ENCODE measurements at regions of chr7 and their contacts with region 1.

Region 1: GRCh38 chr7:66920769-66921395 is at the start of gene TMEM248:
- DNase-seq: peak; percentile 95
- H3K4me3 ChIP-seq: peak within 1 kb of the TSS; percentile 94
- H3K27ac ChIP-seq: peak within 1 kb of the TSS; percentile 89
- H3K4me1 ChIP-seq: peaks cover 32% of the 10 kb centered on the region
- CTCF ChIP-seq: no peak
- total RNA-seq, gene TMEM248: 66.4 and 76.5 TPM in 2 replicates

Region 2: DNA sequence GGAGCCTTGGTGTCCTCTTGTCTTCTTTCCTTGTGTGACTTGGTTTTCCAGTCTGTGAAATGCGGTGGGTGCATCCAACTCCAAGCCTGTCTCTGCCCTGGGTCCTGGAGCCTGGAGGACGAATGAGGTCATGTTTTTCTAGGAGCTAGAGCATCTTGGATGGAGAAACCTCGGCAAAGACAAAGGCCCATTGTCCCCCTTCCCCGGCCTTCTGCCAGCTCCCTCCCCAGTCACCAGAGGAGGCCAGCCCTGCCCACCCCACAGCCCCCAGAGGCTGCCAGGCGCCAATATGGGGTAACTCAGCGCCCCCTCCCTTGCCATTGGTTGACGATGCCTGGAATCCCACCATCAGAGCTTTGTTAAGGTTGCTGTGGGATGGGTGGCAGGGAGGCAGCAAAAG is 251.8 kb before region 1 on chr7:
- CTCF ChIA-PET with region 1: no interaction called
- POLR2A ChIA-PET with region 1: no interaction called
- intact Hi-C with region 1: no loop called
- DNase-seq: no peak
- H3K4me3 ChIP-seq: no peak overlapping the region
- H3K27ac ChIP-seq: no peak overlapping the region
- H3K4me1 ChIP-seq: no peaks in the 10 kb centered on the region
- CTCF ChIP-seq: no peak

Region 3: DNA sequence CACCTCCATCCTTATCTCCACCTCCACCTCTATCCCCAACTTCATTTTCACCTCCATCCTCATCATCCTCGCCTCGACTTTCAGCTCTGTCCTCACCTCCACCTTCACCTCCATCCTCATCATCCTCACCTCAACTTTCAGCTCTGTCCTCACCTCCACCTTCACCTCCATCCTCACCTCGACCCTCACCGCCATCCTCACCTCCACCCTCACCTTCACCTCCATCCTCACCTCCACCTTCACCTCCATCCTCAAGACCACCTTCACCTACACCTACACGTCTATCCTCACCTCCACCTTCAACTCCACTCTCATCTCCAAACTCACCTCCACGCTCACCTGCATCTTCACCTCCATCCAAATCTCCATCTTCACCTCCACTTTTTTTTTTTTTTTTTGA is 192.3 kb before region 1 on chr7:
- CTCF ChIA-PET with region 1: no interaction called
- POLR2A ChIA-PET with region 1: no interaction called
- intact Hi-C with region 1: no loop called
- DNase-seq: no peak
- H3K4me3 ChIP-seq: no peak overlapping the region
- H3K27ac ChIP-seq: no peak overlapping the region
- H3K4me1 ChIP-seq: no peaks in the 10 kb centered on the region
- CTCF ChIP-seq: no peak

Region 4: DNA sequence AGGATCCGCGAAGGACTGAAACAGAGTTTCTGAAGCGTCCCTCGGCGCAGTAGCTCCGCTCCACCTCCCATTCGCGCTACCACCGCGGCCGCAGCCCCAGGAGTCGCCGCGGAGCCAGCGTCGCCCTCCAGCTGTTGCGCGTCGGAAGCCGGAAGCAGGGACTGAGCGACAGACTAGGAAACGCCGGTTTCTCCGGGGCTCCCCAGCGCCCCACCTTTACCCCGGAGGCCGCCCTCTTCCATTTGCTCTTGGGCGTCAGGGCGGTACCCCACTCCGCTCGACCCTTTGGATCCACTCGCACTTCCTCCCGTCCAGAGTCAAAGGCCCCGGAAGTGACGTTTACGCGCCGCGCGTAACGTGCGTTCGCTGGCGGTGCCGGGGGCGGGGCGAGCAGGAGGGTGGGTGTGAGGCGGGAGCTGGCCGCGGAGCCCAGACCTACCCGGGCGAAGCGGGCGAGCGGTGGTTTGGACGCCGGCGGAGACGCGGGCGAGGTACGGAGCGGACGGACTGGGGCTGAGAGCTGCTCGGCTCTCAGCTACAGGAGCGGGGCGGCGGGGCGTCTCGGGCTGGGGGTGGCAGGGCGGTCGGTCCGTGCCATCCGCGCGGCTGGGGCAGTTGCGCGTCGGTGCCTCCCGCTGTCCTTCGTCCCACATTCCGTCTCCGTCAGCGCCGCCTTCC is 180.4 kb before region 1 on chr7 and contains the start of gene RABGEF1:
- CTCF ChIA-PET with region 1: no interaction called
- POLR2A ChIA-PET with region 1: no interaction called
- intact Hi-C with region 1: loop called (anchors 5 kb)
- DNase-seq: peak; percentile 97
- H3K4me3 ChIP-seq: peak within 1 kb of the TSS; percentile 77
- H3K27ac ChIP-seq: peak within 1 kb of the TSS; percentile 80
- H3K4me1 ChIP-seq: peaks cover 39% of the 10 kb centered on the region
- CTCF ChIP-seq: no peak
- total RNA-seq, gene RABGEF1: 18.2 and 21.0 TPM in 2 replicates

Region 5: DNA sequence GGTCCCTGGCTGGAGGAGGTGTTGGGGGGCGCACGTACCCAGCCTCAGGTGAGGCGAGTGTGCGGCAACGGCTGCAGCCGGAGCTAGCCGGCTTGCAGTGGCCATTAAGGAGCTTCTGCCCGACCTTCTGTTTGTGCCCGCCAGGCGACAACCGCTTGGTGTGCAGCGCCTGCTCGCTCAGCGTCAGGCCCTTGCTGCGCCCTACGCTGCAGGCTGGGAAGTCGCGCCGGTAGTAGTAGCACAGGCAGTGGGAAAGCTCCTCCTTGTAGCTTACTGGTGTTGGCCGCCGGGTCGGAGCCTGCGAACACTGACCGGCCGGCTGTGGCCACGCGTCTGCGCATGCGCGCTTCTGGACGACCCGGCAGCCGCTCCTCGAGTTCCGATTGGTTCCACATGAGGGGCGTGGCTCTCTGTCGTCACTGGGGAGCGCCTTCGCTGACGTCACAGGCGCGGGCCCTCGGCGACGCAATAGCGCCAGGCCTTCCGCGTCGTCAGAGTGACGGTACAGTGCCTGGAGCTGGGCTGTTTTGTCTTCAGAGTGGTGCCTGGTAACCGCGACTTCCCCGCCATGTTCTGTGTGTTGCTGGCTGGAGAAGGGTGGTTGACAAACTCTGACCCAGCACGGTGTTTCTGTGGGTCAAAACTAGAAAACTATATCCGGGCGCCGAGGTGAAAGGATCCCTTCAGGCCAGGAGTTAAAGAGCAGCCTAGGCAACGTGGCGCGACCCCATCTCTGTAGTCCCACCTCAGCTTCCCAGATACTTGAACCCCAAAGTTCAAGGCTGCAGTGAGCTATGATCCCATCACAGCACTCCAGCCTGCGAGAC is 76.1 kb before region 1 on chr7:
- CTCF ChIA-PET with region 1: no interaction called
- POLR2A ChIA-PET with region 1: no interaction called
- intact Hi-C with region 1: loop called (anchors 5 kb)
- DNase-seq: peak; percentile 99
- H3K4me3 ChIP-seq: peak overlapping the region; percentile 88
- H3K27ac ChIP-seq: peak overlapping the region; percentile 42
- H3K4me1 ChIP-seq: peaks cover 17% of the 10 kb centered on the region
- CTCF ChIP-seq: 0 out of 2 replicates have a peak, but pooled peaks have one; percentile 28

Region 6: DNA sequence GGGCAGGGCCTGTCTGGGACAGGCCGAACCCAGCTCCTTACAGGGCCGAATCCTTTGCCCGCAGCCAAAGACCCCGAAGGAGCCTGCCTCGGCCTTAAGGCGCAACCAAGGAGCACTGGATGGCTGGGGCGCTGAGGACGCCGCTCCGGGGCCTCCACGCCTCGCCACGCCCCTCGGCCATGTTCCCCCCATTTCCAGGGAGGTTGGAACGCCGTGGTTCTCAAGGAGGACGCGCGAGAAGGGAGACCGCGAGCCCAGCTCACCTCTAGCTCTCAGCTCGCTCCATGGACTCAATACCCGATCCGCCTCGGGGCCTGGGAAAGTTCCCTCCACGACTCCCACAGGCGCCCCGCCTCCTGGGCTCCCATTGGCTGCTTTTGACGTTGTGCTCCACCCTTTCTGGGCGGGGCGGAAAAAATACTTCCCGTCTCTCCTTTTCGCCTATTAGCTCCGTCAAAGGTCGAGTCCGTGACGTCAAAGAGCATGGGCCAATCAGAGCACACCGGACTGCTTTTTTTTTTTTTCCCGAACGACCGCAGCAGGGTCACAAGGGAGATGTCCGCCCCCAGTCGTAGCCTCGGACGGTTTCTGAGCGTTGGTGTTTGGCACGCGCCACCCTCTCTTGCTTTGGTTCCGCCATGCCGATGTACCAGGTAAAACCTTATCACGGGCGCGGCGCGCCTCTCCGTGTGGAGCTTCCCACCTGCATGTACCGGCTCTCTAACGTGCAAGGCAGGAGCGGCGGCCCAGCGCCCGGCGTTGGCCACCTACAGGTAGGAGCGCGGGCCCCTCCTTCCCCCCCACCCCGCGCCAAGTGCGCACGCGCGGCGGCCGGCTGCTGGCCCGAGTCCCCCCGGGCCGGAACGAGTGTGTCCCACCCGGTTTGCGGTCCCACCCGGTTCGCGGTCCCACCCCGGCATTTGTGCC is 381.5 kb after region 1 on chr7:
- CTCF ChIA-PET with region 1: no interaction called
- POLR2A ChIA-PET with region 1: no interaction called
- intact Hi-C with region 1: loop called (anchors 10 kb)
- DNase-seq: peak; percentile 99
- H3K4me3 ChIP-seq: peak overlapping the region; percentile 97
- H3K27ac ChIP-seq: peak overlapping the region; percentile 82
- H3K4me1 ChIP-seq: peaks cover 19% of the 10 kb centered on the region
- CTCF ChIP-seq: peak; percentile 35; the same call in 1 of the 2 replicates

Measured in OCI-LY7 (cell line).